Activated CD4-positive, alpha-beta memory T cell treated with anti-CD3 and anti-CD28 coated beads, Interleukin-2, amount 10 ng/mL, durations not matched to agents 7 days and 5 days (primary cell): ENCODE measurements at regions of chrX and their contacts with region 1.

Region 1: DNA sequence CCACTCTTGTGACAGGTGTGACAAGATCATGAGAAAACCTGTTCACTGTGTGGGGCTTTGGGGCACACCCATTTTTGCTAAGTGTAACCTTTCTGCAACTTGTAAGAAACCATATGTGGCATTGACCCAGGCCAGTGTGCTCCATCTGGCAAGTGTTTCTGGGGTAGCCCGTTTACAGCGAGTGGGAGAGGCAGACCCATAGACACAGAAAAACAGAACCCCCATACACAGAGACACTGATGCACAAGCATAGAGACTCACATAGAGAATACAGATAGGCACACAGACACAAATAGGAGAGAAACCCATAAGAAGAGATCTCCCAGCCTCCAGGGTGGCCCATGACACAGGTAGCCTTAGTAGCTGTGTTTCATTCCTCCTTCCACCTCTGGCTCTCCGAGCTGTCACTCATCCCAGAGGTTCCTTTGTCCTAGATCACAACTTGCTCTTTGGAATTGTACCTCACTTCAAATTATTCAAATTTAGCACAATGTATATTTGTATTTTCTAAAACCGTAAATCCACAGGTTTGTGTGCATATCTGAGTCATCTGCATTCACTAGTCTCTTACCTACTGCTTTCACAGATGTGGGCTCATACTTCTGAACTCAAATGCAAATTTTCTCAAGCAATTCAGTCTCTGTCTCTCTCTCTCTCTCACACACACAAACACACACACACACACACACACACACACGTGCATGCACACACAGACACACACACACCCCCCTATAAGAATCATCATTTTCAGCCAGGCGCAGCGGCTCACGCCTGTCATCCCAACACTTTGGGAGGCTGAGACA is 114.4 kb downstream of the SH3KBP1 start:
- DNase-seq: no peak
- H3K4me3 Mint-ChIP-seq: peak overlapping the region; percentile 18
- H3K27ac Mint-ChIP-seq: peak overlapping the region; percentile 71
- H3K4me1 Mint-ChIP-seq: peaks cover 75% of the 10 kb centered on the region
- H3K27me3 Mint-ChIP-seq: no peaks in the 10 kb centered on the region

Region 2: GRCh38 chrX:19735244-19735643 is 37.8 kb before region 1 on chrX:
- CTCF ChIA-PET with region 1: no interaction called
- POLR2A ChIA-PET with region 1: no interaction called
- DNase-seq: no peak
- H3K4me3 Mint-ChIP-seq: no peak overlapping the region
- H3K27ac Mint-ChIP-seq: no peak overlapping the region
- H3K4me1 Mint-ChIP-seq: peaks cover 49% of the 10 kb centered on the region
- H3K27me3 Mint-ChIP-seq: no peaks in the 10 kb centered on the region

Region 3: DNA sequence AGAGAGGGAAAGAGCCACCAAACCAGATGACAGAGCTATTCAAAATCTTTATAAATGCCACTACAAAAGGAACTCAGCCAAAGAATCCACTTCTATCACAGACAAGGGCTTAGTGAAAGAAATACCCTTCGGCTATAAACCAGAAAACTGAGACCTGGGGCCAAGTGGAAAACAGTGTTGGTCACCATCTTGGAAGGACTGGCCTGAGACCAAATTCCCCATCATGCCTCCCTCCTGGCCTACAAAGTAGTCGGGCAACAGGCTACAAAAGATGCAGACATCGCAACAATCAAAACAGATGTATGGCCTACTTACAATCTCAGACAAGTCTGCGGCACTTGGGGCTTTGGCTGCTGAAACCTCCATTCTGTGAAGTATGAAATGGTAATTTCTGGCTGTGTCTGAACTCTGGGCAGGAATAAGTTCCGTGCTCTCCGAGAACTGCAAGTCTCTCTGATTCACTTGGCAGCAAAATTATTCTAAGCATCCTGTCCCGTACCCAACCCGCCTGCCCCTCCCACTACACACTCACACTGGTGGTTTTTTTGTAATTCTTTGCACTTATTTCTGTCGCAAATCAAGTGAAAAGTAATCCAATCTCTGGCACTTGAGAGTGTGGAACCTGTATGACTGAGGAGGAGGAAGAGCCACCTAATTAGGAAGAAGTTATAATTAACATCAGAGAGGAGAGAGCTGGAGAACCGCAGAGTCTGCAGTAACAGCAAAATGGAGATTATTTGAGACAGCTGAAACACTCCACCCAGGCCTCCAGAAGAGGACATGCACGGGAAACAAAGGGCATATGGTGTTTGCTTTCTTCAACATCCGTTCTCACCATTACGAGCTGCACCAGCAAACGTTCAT is 26.5 kb after region 1 on chrX:
- CTCF ChIA-PET with region 1: no interaction called
- POLR2A ChIA-PET with region 1: interaction called, 14 read pairs
- DNase-seq: peak; percentile 62
- H3K4me3 Mint-ChIP-seq: peak overlapping the region; percentile 90
- H3K27ac Mint-ChIP-seq: peak overlapping the region; percentile 98
- H3K4me1 Mint-ChIP-seq: peaks cover 59% of the 10 kb centered on the region
- H3K27me3 Mint-ChIP-seq: no peaks in the 10 kb centered on the region